Activated naive CD4-positive, alpha-beta T cell treated with anti-CD3 and anti-CD28 coated beads for 36 hours (primary cell): ENCODE measurements at regions of chr2 and their contacts with region 1.

Region 1: DNA sequence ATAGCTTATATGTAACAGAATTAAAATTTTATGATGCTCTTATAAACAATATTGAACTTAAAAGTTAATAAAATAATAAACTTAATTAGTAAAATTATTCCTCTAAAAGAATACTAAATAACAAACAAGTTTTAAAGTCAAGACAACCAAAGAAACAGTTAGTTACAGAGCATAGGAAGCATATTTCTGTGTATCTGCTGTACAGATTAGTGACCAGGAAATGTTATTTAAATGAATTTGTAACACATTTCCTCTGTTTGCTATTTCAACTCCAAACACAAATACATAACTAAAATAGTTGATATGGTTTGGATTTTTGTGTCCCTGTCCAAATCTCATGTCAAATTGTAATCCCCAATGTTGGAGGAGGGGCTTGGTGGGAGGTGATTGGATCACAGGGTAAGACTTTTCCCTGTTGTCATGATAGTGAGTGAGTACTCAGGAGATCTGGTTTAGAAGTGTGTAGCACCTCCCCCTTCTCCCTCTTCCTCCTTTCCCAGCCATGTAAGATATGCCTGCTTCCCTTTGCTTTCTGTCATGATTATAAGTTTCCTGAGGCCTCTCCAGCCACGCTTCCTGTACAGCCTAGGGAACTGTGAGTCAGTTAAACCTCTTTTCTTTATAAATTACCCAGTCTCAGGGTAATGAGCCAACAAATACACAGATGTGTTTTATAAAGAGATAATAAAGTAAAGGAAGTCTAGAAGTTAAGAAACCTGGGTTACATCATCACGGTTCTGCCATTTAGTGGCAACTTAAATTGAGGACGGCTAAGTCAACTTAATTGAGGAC is 51.8 kb downstream of the ROCK2 start:
- DNase-seq: no peak
- H3K4me3 Mint-ChIP-seq: no peak overlapping the region
- H3K27ac Mint-ChIP-seq: no peak overlapping the region
- H3K4me1 Mint-ChIP-seq: peaks cover 28% of the 10 kb centered on the region
- H3K27me3 Mint-ChIP-seq: no peaks in the 10 kb centered on the region

Region 2: DNA sequence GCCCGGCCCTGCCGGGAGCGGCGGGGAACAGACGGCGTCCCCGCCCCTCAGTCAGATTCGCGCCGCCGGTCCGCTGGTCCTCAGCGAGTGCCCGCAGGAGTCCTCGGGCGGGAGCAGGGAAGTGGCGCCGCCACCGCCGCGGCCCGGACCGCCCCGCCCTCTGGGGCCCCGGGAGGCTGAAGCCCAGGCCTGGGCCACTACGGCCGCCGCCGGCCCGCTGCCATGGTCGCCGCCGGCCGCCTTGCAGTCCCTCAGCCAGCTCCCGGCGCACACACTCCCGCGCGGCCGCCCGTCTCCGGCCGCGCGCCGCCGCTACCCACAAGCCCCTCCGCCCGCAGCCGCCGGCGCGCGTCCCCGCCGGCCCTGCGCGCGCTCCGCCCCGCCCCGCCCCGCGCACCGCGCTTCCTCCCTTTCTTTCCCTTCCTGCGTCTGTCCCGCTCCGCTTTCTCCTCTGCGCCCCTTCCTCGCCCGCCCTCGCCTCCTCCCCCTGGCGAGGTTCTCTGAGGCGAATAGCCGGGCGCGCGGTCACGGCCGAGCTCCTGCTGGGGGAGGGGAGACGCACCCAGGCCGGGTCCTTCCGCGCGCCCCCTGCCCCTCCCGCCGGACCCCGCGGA is 51.8 kb after region 1 on chr2 and contains the start of gene ROCK2:
- CTCF ChIA-PET with region 1: no interaction called
- intact Hi-C with region 1: loop called (anchors 5 kb)
- DNase-seq: peak; percentile 72
- H3K4me3 Mint-ChIP-seq: peak within 1 kb of the TSS; percentile 99
- H3K27ac Mint-ChIP-seq: peak within 1 kb of the TSS; percentile 85
- H3K4me1 Mint-ChIP-seq: peaks cover 29% of the 10 kb centered on the region
- H3K27me3 Mint-ChIP-seq: no peaks in the 10 kb centered on the region
- total RNA-seq, gene ROCK2: 8.4 to 9.4 TPM